Caco-2 (cell line): ENCODE measurements at regions of chr12 and their contacts with region 1.

Region 1: GRCh38 chr12:105480162-105480561 is 149.7 kb downstream of the C12orf75 start:
- DNase-seq: peak; percentile 55 to 65
- H3K4me3 ChIP-seq: no peak overlapping the region
- H3K4me3 Mint-ChIP-seq: no peak overlapping the region
- H3K27ac Mint-ChIP-seq: peak overlapping the region; percentile 65
- H3K4me1 ChIP-seq: peaks cover 32% of the 10 kb centered on the region
- H3K4me1 Mint-ChIP-seq: peaks cover 46% of the 10 kb centered on the region
- H3K27me3 ChIP-seq: no peaks in the 10 kb centered on the region
- H3K27me3 Mint-ChIP-seq: no peaks in the 10 kb centered on the region
- CTCF ChIP-seq: no peak

Region 2: GRCh38 chr12:105413911-105414487 is 66.2 kb before region 1 on chr12:
- CTCF ChIA-PET with region 1: no interaction called
- POLR2A ChIA-PET with region 1: no interaction called
- intact Hi-C with region 1: no loop called
- DNase-seq: no peak
- H3K4me3 ChIP-seq: no peak overlapping the region
- H3K4me3 Mint-ChIP-seq: no peak overlapping the region
- H3K27ac Mint-ChIP-seq: no peak overlapping the region
- H3K4me1 ChIP-seq: no peaks in the 10 kb centered on the region
- H3K4me1 Mint-ChIP-seq: peaks cover 7% of the 10 kb centered on the region
- H3K27me3 ChIP-seq: no peaks in the 10 kb centered on the region
- H3K27me3 Mint-ChIP-seq: no peaks in the 10 kb centered on the region
- CTCF ChIP-seq: no peak

Region 3: DNA sequence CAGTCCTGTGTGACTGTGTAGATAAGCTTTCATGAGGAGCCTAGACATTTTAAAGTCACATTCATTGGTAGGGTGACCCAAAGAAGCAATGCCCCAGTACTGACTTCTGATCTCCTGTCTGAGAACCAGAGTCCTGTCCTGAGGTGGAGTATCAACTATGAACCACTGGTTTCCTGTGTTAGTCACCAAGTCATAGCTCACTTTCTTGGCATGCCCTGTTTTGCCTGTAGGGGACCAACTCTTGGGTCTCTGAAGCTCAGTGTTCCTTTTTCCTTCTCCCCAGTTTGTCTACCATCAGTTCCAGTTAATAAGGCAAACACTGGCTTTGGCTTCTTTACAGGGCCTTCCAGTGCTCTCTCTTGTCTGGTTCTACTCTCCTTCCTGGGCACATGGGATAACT is 52.3 kb before region 1 on chr12:
- CTCF ChIA-PET with region 1: no interaction called
- POLR2A ChIA-PET with region 1: no interaction called
- intact Hi-C with region 1: no loop called
- DNase-seq: no peak
- H3K4me3 ChIP-seq: no peak overlapping the region
- H3K4me3 Mint-ChIP-seq: no peak overlapping the region
- H3K27ac Mint-ChIP-seq: no peak overlapping the region
- H3K4me1 ChIP-seq: peaks cover 19% of the 10 kb centered on the region
- H3K4me1 Mint-ChIP-seq: peaks cover 6% of the 10 kb centered on the region
- H3K27me3 ChIP-seq: no peaks in the 10 kb centered on the region
- H3K27me3 Mint-ChIP-seq: no peaks in the 10 kb centered on the region
- CTCF ChIP-seq: no peak

Region 4: DNA sequence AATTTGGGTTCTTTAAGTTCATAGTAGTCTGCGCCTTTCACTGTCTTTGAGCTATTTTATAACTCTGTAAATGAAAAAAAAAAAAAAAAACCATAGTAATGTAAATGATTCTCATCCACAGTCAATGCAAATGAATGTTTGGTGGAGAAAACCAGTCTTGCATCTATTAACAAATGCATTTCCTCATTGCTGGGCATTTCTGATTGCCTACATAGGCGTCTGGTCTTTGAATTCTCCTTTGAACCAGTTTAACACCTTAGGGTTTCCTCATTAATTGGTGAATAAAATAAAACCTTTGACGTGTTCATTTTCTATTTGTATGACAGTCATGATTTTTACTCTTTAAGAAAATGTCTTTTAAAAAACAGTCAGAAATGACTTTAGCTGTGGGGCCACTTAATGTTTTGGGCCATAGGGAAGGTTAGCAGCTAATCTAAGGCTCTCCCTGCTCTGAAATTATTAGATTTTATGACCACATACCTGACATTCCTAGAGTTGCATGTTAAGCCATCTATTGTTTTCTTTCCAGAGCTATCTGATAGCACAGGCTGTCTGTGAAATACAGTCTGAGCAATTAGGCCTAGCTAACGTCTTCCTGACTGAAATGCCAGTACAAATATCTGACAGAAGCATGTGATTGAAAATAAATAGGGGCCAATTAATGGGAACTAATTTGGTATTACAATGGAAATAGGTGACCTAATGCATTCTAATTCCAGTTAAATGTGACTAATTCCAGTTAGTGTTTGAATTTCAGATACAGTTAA is 34.7 kb before region 1 on chr12:
- CTCF ChIA-PET with region 1: no interaction called
- POLR2A ChIA-PET with region 1: interaction called, 8 read pairs
- intact Hi-C with region 1: loop called (anchors 1 kb)
- DNase-seq: peak; percentile 50 to 69
- H3K4me3 ChIP-seq: no peak overlapping the region
- H3K4me3 Mint-ChIP-seq: no peak overlapping the region
- H3K27ac Mint-ChIP-seq: peak overlapping the region; percentile 88
- H3K4me1 ChIP-seq: peaks cover 45% of the 10 kb centered on the region
- H3K4me1 Mint-ChIP-seq: peaks cover 15% of the 10 kb centered on the region
- H3K27me3 ChIP-seq: no peaks in the 10 kb centered on the region
- H3K27me3 Mint-ChIP-seq: no peaks in the 10 kb centered on the region
- CTCF ChIP-seq: no peak

Region 5: DNA sequence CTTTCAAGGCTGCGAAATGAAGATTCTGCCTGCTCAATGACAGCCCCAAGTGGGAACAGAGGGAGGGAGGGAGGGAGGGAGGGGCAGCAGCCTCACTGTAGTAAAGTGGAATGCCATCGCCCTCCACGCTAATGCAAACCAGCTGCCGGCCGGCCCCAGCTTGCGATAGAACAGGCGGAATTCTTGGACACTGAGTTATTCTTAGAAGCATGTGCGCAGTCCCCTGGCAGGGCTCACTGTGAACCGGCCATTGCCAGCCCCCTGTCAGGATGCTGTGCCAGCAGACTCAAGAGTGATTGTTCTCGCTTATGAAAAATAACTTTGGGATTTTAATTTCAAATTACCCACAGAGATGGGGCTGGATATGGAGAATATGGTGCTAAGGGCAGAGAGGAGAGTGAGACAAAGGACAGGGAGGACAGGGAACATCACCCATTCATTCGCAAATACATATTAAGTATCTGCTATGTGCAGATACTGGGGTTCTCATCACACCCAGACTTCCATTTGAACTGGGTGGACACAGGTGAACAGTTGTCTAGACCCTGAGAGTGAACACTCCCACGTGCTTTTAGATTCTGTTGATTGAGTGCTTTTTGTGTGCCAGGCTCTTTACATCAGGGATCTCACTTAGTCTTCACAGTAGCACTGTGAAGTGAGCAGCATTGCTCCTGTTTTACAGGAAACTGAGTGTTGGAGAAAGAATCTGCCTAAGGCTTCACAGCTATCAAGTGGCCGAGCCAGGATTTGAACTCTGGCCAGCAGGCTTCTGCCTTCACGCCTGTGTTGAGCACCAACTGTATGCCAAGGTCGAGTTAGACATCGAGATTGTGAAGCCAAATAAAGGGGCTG is 43.2 kb after region 1 on chr12:
- CTCF ChIA-PET with region 1: no interaction called
- POLR2A ChIA-PET with region 1: no interaction called
- intact Hi-C with region 1: no loop called
- DNase-seq: no peak
- H3K4me3 ChIP-seq: no peak overlapping the region
- H3K4me3 Mint-ChIP-seq: no peak overlapping the region
- H3K27ac Mint-ChIP-seq: peak overlapping the region; percentile 65
- H3K4me1 ChIP-seq: peaks cover 24% of the 10 kb centered on the region
- H3K4me1 Mint-ChIP-seq: peaks cover 29% of the 10 kb centered on the region
- H3K27me3 ChIP-seq: no peaks in the 10 kb centered on the region
- H3K27me3 Mint-ChIP-seq: no peaks in the 10 kb centered on the region
- CTCF ChIP-seq: no peak

Region 6: DNA sequence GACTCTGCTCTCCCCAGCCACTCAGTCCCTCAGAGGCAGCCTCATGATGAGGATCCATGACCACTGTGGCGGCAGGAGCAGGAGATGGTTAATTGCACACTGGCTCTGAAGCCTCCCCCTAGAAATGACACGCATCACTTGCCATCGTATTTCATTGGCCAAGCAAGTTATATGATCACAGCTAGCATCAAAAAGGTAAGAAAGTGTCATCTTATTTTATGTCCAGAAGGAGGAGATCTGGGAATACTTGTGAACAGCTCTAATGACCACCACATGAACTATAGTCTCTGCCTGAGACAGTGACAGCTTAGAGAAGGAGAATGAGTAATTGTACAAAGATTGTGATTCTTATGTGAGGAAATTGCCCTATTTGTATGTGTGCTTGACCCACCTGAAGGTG is 295.2 kb after region 1 on chr12:
- CTCF ChIA-PET with region 1: no interaction called
- POLR2A ChIA-PET with region 1: no interaction called
- intact Hi-C with region 1: no loop called
- DNase-seq: no peak
- H3K4me3 ChIP-seq: no peak overlapping the region
- H3K4me3 Mint-ChIP-seq: no peak overlapping the region
- H3K27ac Mint-ChIP-seq: no peak overlapping the region
- H3K4me1 ChIP-seq: no peaks in the 10 kb centered on the region
- H3K4me1 Mint-ChIP-seq: no peaks in the 10 kb centered on the region
- H3K27me3 ChIP-seq: no peaks in the 10 kb centered on the region
- H3K27me3 Mint-ChIP-seq: no peaks in the 10 kb centered on the region
- CTCF ChIP-seq: no peak